HCT116 (cell line): ENCODE measurements at regions of chr6 and their contacts with region 1.

Region 1: GRCh38 chr6:166627033-166627874 is at the start of gene RPS6KA2:
- DNase-seq: peak; percentile 97
- ATAC-seq: peak; percentile 94
- H3K4me3 ChIP-seq: peak within 1 kb of the TSS; percentile 54 to 68
- H3K27ac ChIP-seq: peak within 1 kb of the TSS; percentile 47
- H3K4me1 ChIP-seq: peaks cover 9 to 32% of the 10 kb centered on the region in 2 experiments; a peak in 3 of 4 replicates
- H3K27me3 ChIP-seq: no peaks in the 10 kb centered on the region
- CTCF ChIP-seq: no peak
- POLR2A ChIP-seq: peak; percentile 42
- RAD21 ChIP-seq: 0 out of 2 replicates have a peak, but pooled peaks have one; percentile 6
- total RNA-seq, gene RPS6KA2: 8.5 TPM

Region 2: GRCh38 chr6:166466178-166467122 is 160.8 kb before region 1 on chr6:
- CTCF ChIA-PET with region 1: no interaction called
- POLR2A ChIA-PET with region 1: no interaction called
- RAD21 ChIA-PET with region 1: interaction called in 1 of 2 experiments, 11 read pairs
- intact Hi-C with region 1: no loop called
- DNase-seq: no peak
- ATAC-seq: peak; percentile 50
- H3K4me3 ChIP-seq: no peak overlapping the region
- H3K27ac ChIP-seq: no peak overlapping the region
- H3K4me1 ChIP-seq: no peaks in the 10 kb centered on the region
- H3K27me3 ChIP-seq: no peaks in the 10 kb centered on the region
- CTCF ChIP-seq: no peak
- POLR2A ChIP-seq: no peak
- RAD21 ChIP-seq: no peak

Region 3: GRCh38 chr6:166530211-166531095 is 96.8 kb before region 1 on chr6:
- CTCF ChIA-PET with region 1: no interaction called
- POLR2A ChIA-PET with region 1: no interaction called
- RAD21 ChIA-PET with region 1: no interaction called
- intact Hi-C with region 1: loop called (anchors 5 kb)
- DNase-seq: peak; percentile 54
- ATAC-seq: peak; percentile 86
- H3K4me3 ChIP-seq: peak overlapping the region; percentile 41 to 59
- H3K27ac ChIP-seq: peak overlapping the region; percentile 23
- H3K4me1 ChIP-seq: peaks cover 15 to 23% of the 10 kb centered on the region in 2 experiments
- H3K27me3 ChIP-seq: no peaks in the 10 kb centered on the region
- CTCF ChIP-seq: no peak
- POLR2A ChIP-seq: no peak
- RAD21 ChIP-seq: no peak

Region 4: GRCh38 chr6:166645924-166646323 is 18.7 kb after region 1 on chr6:
- CTCF ChIA-PET with region 1: no interaction called
- POLR2A ChIA-PET with region 1: no interaction called
- RAD21 ChIA-PET with region 1: no interaction called
- intact Hi-C with region 1: no loop called
- DNase-seq: no peak
- ATAC-seq: no peak
- H3K4me3 ChIP-seq: no peak overlapping the region
- H3K27ac ChIP-seq: no peak overlapping the region
- H3K4me1 ChIP-seq: peaks cover 0 to 7% of the 10 kb centered on the region in 2 experiments; a peak in 2 of 4 replicates
- H3K27me3 ChIP-seq: no peaks in the 10 kb centered on the region
- CTCF ChIP-seq: no peak
- POLR2A ChIP-seq: no peak
- RAD21 ChIP-seq: no peak

Region 5: DNA sequence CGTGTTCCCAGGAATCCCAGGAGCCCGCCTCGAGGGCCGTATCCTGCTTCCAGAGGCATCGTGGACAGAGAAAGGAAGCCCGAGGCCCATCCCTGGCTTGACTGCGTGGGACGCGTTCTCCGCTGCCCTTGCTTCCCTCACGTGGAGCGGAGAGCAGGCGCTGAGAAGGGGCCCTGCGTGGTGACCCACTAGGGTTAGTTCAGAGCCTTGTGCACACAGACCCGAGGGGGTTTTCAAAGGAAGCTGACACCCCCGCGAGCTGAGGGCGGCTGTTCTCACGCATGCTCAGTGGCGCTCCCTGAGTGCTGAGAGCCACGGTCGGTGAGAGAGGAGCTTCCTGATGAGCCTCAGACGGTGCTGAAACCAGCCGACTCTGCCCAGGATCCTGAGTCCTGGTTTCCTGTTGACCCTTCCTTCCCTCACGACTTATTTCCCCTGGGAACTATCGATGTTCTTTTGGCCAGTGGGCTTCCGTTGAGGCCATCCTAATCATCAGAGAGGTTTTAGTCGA is 466.7 kb after region 1 on chr6:
- CTCF ChIA-PET with region 1: no interaction called
- POLR2A ChIA-PET with region 1: no interaction called
- RAD21 ChIA-PET with region 1: no interaction called
- intact Hi-C with region 1: no loop called
- DNase-seq: no peak
- ATAC-seq: no peak
- H3K4me3 ChIP-seq: no peak overlapping the region
- H3K27ac ChIP-seq: no peak overlapping the region
- H3K4me1 ChIP-seq: no peaks in the 10 kb centered on the region
- H3K27me3 ChIP-seq: no peaks in the 10 kb centered on the region
- CTCF ChIP-seq: no peak
- POLR2A ChIP-seq: no peak
- RAD21 ChIP-seq: no peak